ENCODE measurements at regions of chr6 and their contacts with region 1.

Region 1: DNA sequence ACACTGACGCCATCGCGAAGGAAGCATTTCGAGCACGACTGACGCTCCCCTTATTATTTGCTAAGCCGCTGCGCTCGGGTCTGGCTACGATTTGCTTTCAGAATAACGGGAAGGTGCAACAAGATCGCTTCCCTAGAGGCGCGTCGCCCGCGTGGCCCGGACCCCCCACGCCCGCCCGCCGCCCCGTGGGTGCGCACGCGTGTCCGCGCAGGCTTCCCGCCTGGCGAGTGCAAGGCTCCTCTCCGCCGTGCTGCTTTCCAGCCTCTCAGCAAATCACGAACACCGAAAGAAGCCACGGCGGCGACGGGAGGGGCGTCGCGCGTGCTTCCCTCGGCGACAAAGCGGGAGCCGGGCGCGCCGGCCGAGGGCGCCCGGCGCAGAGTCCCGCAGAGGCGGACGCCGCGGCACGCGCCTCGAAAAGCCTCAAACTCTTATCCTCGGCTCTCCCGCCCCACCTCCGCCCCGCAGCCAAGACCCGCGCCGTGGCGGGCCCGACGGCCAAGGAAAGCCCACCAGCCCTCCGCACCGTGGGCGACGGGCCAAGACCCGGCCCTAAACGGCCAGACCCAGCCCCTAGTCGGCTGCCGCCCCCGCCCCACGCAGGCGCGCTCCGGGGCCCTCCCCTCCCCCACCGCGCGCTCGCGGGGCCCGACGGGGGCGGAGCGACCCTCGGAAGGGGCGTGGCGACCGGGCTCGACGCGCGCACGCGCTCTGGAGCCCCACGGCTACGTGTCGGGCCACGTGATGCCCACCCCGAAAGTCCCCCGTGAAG is 987 bp upstream of the QKI start:
- DNase-seq: peak; percentile 90 to 91
- ATAC-seq: peak; percentile 87 to 96 (median 90)
- H3K4me3 ChIP-seq: peak overlapping the region; percentile 48 to 85 (median 74)
- H3K27ac ChIP-seq: peak overlapping the region; percentile 95 to 100 (median 100)
- H3K4me1 ChIP-seq: peaks cover 0 to 28% (median 13%) of the 10 kb centered on the region in 9 donors
- H3K27me3 ChIP-seq: no peaks in the 10 kb centered on the region
- CTCF ChIP-seq: peak in 2 of 9 donors; percentile 6 to 8

Region 2: DNA sequence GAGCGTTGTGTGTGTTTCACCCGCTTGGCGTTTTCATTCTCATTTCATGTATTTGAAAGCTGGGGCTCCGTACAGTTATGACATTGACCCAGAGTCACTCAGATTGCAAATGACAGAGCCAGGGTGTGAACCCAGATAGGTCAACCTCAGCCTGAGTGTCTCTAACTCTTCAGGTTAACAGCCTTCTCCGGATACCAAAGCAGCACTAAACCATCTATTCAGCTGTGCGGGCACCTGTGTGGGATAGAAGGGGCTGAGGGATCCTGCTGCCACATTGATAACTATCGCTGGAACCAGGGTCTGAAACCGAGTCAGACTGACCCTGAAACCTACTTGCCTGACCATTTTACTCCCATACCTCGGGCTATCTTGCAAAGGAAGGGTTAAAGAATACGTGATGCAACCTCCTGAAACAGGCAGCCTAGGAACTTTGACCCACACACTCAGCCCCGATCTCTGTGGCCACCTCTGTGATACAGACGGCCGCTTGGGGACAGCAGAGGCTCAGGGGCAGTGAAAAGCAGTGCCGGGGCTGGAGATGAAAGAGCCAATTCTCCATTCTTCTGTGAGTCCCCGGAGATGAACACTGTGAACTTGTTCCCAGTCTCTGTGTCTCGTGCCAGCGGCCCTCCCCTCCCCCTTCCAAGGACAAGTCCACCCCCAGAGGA is 232.5 kb before region 1 on chr6:
- intact Hi-C with region 1: loop called in 8 of 10 experiments (anchors 1 to 5 kb)
- DNase-seq: peak; percentile 82 to 83
- ATAC-seq: peak; percentile 94 to 97 (median 96)
- H3K4me3 ChIP-seq: peak overlapping the region in 5 of 10 donors; percentile 2 to 31 (median 26)
- H3K27ac ChIP-seq: peak overlapping the region in 6 of 10 donors; percentile 5 to 33 (median 25)
- H3K4me1 ChIP-seq: peaks cover 4 to 36% (median 23%) of the 10 kb centered on the region in 9 donors
- H3K27me3 ChIP-seq: no peaks in the 10 kb centered on the region
- CTCF ChIP-seq: peak; percentile 74 to 96 (median 91)

Region 3: GRCh38 chr6:163260111-163260895 is 153.2 kb before region 1 on chr6:
- intact Hi-C with region 1: loop called in 2 of 10 experiments (anchors 5 to 10 kb)
- DNase-seq: peak in 1 of 2 donors; percentile 55
- ATAC-seq: peak; percentile 5 to 57 (median 46)
- H3K4me3 ChIP-seq: peak overlapping the region in 8 of 10 donors; percentile 8 to 44 (median 30)
- H3K27ac ChIP-seq: peak overlapping the region; percentile 15 to 77 (median 64)
- H3K4me1 ChIP-seq: peaks cover 4 to 44% (median 20%) of the 10 kb centered on the region in 9 donors
- H3K27me3 ChIP-seq: no peaks in the 10 kb centered on the region
- CTCF ChIP-seq: no peak

Region 4: DNA sequence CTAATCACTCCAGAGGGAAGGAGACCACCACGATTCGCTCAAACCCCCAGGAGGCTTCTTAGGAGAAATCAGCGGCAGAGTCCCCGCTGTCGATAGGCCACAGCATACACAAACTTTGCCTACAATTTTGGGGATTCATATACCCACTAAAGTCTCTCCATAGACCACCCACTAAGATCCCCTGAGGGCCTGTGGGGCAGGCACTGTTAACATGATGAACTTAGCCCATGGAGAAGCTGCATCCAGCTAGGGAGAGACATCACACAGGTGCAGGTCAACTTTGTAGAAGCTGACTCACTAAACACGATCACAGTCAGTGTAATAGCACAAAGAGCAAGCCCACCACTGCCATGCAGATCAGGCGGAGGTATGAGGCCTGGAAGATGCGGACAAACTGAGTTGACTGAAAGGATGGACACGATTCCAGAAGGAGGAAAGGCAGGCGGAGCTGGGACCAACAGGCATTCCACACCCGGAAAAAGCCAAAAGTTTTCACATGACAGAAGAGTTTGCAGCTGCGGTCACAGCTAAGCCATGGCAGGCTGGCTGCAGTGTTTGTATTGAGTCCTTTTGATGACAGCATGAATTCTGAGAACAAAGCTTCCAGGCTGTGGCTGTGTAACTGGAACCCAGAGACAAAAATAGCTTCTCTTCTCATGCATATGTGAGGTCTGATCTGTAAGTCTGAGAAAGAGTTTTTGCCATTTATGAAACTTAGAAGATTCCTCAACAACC is 74.7 kb before region 1 on chr6:
- intact Hi-C with region 1: loop called in 9 of 10 experiments (anchors 1 to 5 kb)
- DNase-seq: peak in 1 of 2 donors; percentile 72
- ATAC-seq: peak; percentile 40 to 77 (median 64)
- H3K4me3 ChIP-seq: peak overlapping the region in 1 of 10 donors; percentile 5
- H3K27ac ChIP-seq: peak overlapping the region; percentile 71 to 98 (median 86)
- H3K4me1 ChIP-seq: peaks cover 28 to 88% (median 58%) of the 10 kb centered on the region in 9 donors
- H3K27me3 ChIP-seq: no peaks in the 10 kb centered on the region
- CTCF ChIP-seq: no peak

Region 5: GRCh38 chr6:163711615-163712565 is 298.4 kb after region 1 on chr6:
- intact Hi-C with region 1: loop called in 3 of 10 experiments (anchors 2 to 5 kb)
- DNase-seq: peak; percentile 80 to 83
- ATAC-seq: peak; percentile 67 to 81 (median 76)
- H3K4me3 ChIP-seq: no peak overlapping the region
- H3K27ac ChIP-seq: peak overlapping the region; percentile 69 to 86 (median 80)
- H3K4me1 ChIP-seq: peaks cover 28 to 68% (median 61%) of the 10 kb centered on the region in 9 donors
- H3K27me3 ChIP-seq: no peaks in the 10 kb centered on the region
- CTCF ChIP-seq: peak in 8 of 9 donors; percentile 17 to 59 (median 39)

Region 6: GRCh38 chr6:164927288-164928056 is 1513.9 kb after region 1 on chr6:
- intact Hi-C with region 1: loop called in 2 of 10 experiments (anchors 10 kb)
- DNase-seq: peak; percentile 48 to 74
- ATAC-seq: peak; percentile 83 to 96 (median 92)
- H3K4me3 ChIP-seq: peak overlapping the region in 3 of 10 donors; percentile 10 to 18 (median 14)
- H3K27ac ChIP-seq: no peak overlapping the region
- H3K4me1 ChIP-seq: peaks cover 0 to 13% (median 7%) of the 10 kb centered on the region in 9 donors
- H3K27me3 ChIP-seq: no peaks in the 10 kb centered on the region
- CTCF ChIP-seq: peak; percentile 94 to 100 (median 97)

Measured in heart right ventricle (tissue), 16 donors.